AG04449 (cell line): ENCODE measurements at regions of chr9 and their contacts with region 1.

Region 1: GRCh38 chr9:33924978-33925797 is 108.2 kb downstream of the UBE2R2 start:
- DNase-seq: no peak
- H3K4me3 ChIP-seq: no peak overlapping the region
- CTCF ChIP-seq: peak; percentile 67

Region 2: GRCh38 chr9:33913541-33913940 is 11.6 kb before region 1 on chr9:
- CTCF ChIA-PET with region 1: interaction called, 28 read pairs
- POLR2A ChIA-PET with region 1: no interaction called
- DNase-seq: no peak
- H3K4me3 ChIP-seq: no peak overlapping the region
- CTCF ChIP-seq: no peak

Region 3: GRCh38 chr9:33952066-33952465 is 26.9 kb after region 1 on chr9:
- CTCF ChIA-PET with region 1: no interaction called
- POLR2A ChIA-PET with region 1: no interaction called
- DNase-seq: no peak
- H3K4me3 ChIP-seq: no peak overlapping the region
- CTCF ChIP-seq: no peak

Region 4: GRCh38 chr9:34025062-34025461 is 99.9 kb after region 1 on chr9:
- CTCF ChIA-PET with region 1: interaction called, 17 read pairs
- POLR2A ChIA-PET with region 1: no interaction called
- DNase-seq: peak; percentile 14
- H3K4me3 ChIP-seq: no peak overlapping the region
- CTCF ChIP-seq: no peak